ENCODE measurements at regions of chr3 and their contacts with region 1.

Region 1: DNA sequence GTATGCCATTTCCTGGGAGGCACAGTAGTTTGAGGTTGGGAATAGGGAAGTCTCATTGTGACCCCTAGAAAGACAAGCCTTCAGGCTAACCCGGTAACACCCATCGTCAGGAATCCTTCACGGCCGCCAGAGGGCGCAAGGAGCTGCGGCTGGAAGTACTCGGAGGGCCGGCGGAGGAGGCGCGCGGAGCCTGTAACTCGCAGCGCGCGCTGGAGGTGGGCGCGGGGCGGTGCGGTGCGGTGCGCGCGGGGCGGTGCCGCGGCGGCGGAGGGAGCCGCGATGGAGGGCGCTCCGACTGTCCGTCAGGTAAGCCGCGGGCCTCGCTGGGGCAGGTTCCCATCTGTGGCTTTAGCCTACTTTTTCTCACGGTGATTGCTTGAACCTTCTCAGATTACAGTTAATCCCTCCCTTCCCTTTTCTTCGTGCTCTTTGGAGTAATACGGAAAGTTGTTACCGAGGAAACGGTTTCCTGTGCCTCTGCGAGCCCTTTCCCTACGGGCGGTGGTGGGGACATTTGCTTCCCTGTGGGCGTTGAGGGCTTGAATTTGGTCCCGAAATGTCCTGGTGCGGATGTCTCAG is at the start of gene GRAMD1C:
- DNase-seq: peak; percentile 87
- H3K4me3 Mint-ChIP-seq: peak within 1 kb of the TSS; percentile 72
- H3K27ac Mint-ChIP-seq: no peak within 1 kb of the TSS
- H3K4me1 Mint-ChIP-seq: peaks cover 10% of the 10 kb centered on the region
- H3K27me3 Mint-ChIP-seq: no peaks in the 10 kb centered on the region
- CTCF ChIP-seq: peak; percentile 83
- total RNA-seq, gene GRAMD1C: 5.0 and 6.3 TPM in 2 replicates

Region 2: GRCh38 chr3:113736548-113737089 is 102.1 kb before region 1 on chr3:
- CTCF ChIA-PET with region 1: no interaction called
- intact Hi-C with region 1: loop called (anchors 2 kb)
- DNase-seq: no peak
- H3K4me3 Mint-ChIP-seq: no peak overlapping the region
- H3K27ac Mint-ChIP-seq: no peak overlapping the region
- H3K4me1 Mint-ChIP-seq: peaks cover 9% of the 10 kb centered on the region
- H3K27me3 Mint-ChIP-seq: no peaks in the 10 kb centered on the region
- CTCF ChIP-seq: peak; percentile 28